ENCODE measurements at regions of chr7 and their contacts with region 1.

Region 1: GRCh38 chr7:79176859-79177477 is 276.5 kb downstream of the MAGI2 start:
- DNase-seq: no peak
- ATAC-seq: peak; percentile 54
- H3K4me3 ChIP-seq: no peak overlapping the region
- H3K27ac ChIP-seq: no peak overlapping the region
- H3K4me1 ChIP-seq: no peaks in the 10 kb centered on the region
- H3K27me3 ChIP-seq: no peaks in the 10 kb centered on the region
- CTCF ChIP-seq: peak; percentile 37 to 53 (median 49); a peak in 5 of 6 replicates
- EP300 ChIP-seq: no peak
- POLR2A ChIP-seq: no peak
- RAD21 ChIP-seq: peak; percentile 73

Region 2: GRCh38 chr7:78510580-78511188 is 666.3 kb before region 1 on chr7:
- CTCF ChIA-PET with region 1: interaction called, 8 read pairs
- POLR2A ChIA-PET with region 1: no interaction called
- RAD21 ChIA-PET with region 1: no interaction called
- SMC1A ChIA-PET with region 1: no interaction called
- in situ Hi-C with region 1: no loop called
- intact Hi-C with region 1: loop called (anchors 5 kb)
- DNase-seq: no peak
- ATAC-seq: peak; percentile 71
- H3K4me3 ChIP-seq: no peak overlapping the region
- H3K27ac ChIP-seq: no peak overlapping the region
- H3K4me1 ChIP-seq: no peaks in the 10 kb centered on the region
- H3K27me3 ChIP-seq: no peaks in the 10 kb centered on the region
- CTCF ChIP-seq: peak; percentile 58 to 69 (median 68)
- EP300 ChIP-seq: no peak
- POLR2A ChIP-seq: no peak
- RAD21 ChIP-seq: peak; percentile 72

Region 3: GRCh38 chr7:78607099-78607498 is 569.9 kb before region 1 on chr7:
- CTCF ChIA-PET with region 1: no interaction called
- POLR2A ChIA-PET with region 1: no interaction called
- RAD21 ChIA-PET with region 1: no interaction called
- SMC1A ChIA-PET with region 1: no interaction called
- in situ Hi-C with region 1: no loop called
- intact Hi-C with region 1: loop called (anchors 10 kb)
- DNase-seq: no peak
- ATAC-seq: 0 out of 3 replicates have a peak, but pooled peaks have one; percentile 41
- H3K4me3 ChIP-seq: no peak overlapping the region
- H3K27ac ChIP-seq: no peak overlapping the region
- H3K4me1 ChIP-seq: no peaks in the 10 kb centered on the region
- H3K27me3 ChIP-seq: no peaks in the 10 kb centered on the region
- CTCF ChIP-seq: peak; percentile 30 to 38 (median 33); a peak in 5 of 6 replicates
- EP300 ChIP-seq: no peak
- POLR2A ChIP-seq: no peak
- RAD21 ChIP-seq: peak; percentile 39; the same call in 1 of the 2 replicates

Region 4: DNA sequence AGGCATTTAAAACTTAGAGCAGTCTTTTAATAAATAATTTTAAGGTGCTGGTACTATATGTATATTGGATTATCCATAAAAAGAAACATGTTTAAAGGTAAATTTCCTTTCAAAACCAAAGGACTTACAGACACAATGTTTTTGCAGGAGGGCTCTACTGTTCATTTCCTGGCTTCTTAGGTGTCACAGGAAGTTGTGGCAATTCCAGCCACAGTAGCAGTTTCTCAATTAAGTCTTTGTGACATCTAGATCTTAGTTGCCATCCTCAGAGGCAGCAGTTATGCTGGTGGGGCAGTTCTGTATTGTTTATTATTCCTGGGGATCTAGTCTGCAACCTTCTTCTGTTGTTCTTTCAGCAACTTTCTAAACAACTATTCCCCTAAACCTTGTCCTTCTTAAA is 183.6 kb before region 1 on chr7:
- CTCF ChIA-PET with region 1: no interaction called
- POLR2A ChIA-PET with region 1: no interaction called
- RAD21 ChIA-PET with region 1: no interaction called
- SMC1A ChIA-PET with region 1: no interaction called
- in situ Hi-C with region 1: no loop called
- intact Hi-C with region 1: no loop called
- DNase-seq: no peak
- ATAC-seq: no peak
- H3K4me3 ChIP-seq: no peak overlapping the region
- H3K27ac ChIP-seq: no peak overlapping the region
- H3K4me1 ChIP-seq: no peaks in the 10 kb centered on the region
- H3K27me3 ChIP-seq: no peaks in the 10 kb centered on the region
- CTCF ChIP-seq: no peak
- EP300 ChIP-seq: no peak
- POLR2A ChIP-seq: no peak
- RAD21 ChIP-seq: no peak

Region 5: DNA sequence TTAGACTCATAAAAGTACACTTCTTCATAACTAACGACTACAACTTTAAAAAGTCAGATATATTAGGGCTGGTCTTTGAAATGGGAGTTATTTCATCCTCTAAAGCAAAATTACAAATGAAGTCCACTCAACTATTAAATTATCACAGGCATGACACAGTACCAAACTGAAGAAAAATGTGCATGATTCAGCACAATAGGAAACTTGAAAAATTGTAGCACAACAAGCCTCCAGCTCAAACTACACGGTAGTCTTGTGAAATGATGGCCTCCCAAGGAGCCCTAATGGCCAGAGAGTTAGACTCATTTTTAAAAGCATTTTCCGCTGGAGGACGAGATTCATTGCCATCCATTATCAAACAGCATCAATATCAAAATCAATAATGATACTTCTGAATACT is 200.1 kb after region 1 on chr7:
- CTCF ChIA-PET with region 1: no interaction called
- POLR2A ChIA-PET with region 1: no interaction called
- RAD21 ChIA-PET with region 1: no interaction called
- SMC1A ChIA-PET with region 1: no interaction called
- in situ Hi-C with region 1: no loop called
- intact Hi-C with region 1: no loop called
- DNase-seq: no peak
- ATAC-seq: no peak
- H3K4me3 ChIP-seq: no peak overlapping the region
- H3K27ac ChIP-seq: no peak overlapping the region
- H3K4me1 ChIP-seq: no peaks in the 10 kb centered on the region
- H3K27me3 ChIP-seq: no peaks in the 10 kb centered on the region
- CTCF ChIP-seq: no peak
- EP300 ChIP-seq: no peak
- POLR2A ChIP-seq: no peak
- RAD21 ChIP-seq: no peak